ENCODE measurements at regions of chr10 and their contacts with region 1.

Region 1: DNA sequence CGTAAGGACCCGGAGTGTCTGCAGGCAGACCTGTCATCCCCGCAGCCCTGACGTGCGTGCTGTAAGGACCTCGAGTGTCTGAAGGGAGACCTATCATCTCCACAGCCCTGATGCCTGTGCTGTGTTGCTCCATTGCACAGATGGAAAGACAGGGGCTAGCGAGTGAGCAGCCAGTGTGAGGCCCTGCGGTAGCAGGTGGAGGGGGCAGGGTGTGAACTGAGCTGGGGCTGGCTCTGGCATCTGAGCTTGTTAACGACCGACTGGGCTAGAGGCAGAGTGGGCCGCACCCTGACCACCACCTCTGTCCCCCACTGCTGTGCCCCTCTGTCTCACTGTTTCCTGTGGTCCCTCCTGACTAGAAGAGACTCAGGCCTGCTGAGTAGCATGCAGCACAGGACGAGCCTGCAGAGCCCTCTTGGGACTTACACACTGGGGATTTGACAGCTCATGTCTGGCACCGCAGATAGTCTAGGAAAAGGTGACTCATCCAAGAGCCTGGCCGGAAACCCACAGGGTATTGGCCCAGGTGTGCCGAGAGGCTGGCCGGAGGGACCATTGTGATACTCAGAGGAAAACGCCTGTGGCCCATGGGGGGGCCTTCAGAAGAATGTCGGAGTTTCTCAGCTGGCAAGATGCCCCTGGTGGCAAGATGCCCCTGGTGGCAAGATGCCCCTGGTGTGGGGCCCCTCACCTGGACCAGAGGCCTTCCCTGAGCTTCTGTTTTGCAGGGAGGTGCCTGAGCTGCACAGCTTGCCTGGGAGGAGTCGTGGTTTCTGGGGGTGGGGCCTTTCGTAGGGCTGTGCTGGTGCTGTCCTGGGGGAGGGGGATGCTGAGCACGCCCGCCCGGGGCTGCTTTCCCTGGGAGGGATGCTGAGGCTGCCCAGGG is 34.3 kb downstream of the INPP5A start:
- DNase-seq: peak; percentile 90
- H3K4me3 Mint-ChIP-seq: no peak overlapping the region
- H3K27ac Mint-ChIP-seq: peak overlapping the region; percentile 84
- H3K4me1 Mint-ChIP-seq: peaks cover 15% of the 10 kb centered on the region
- H3K27me3 Mint-ChIP-seq: no peaks in the 10 kb centered on the region

Region 2: DNA sequence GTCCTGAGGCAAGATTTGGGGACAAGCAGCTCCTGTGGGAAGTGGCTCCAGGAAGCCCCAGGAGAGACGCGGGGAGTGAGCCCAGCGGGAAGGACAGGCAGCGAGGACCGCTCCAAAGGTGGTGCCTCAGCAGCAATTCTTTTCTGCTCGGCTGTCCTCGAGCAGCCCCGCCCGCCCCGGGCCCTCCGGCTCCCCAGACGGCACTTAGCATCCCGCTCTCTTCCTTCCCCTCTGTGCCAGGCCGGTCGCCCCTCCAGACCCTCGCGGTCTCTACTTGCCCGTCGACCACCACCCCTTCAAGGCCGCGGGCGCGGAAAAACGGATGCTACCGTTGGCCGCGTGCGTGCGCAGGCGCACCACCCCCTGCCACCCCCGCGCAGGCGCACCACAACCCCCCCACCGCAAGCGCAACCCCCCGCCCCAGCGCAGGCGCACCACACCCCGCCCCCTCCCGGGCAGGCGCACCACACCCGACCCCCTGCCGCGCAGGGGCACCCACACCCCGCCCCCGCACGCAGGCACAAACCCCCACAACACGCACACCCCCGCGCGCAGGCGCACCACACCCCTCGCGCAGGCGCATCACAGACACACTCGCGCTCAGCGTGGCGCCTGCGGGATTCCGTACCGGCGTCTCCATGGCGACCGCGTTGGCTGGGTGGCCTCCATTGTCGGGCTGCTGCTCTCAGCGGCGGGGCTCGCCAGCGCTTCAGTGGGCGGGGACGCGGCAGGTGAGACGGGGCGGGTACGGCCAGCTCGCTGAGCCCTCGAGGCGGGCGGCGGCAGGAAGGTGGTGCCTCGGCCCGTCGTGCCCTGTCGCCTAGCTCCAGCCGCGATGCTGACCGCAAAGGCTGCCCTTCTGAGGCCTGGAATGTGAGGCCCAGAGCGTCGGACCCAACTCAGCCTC is 240.1 kb before region 1 on chr10 and contains the start of gene LRRC27:
- intact Hi-C with region 1: no loop called
- DNase-seq: peak; percentile 100
- H3K4me3 Mint-ChIP-seq: peak within 1 kb of the TSS; percentile 88
- H3K27ac Mint-ChIP-seq: peak within 1 kb of the TSS; percentile 96
- H3K4me1 Mint-ChIP-seq: peaks cover 50% of the 10 kb centered on the region
- H3K27me3 Mint-ChIP-seq: peaks cover 4% of the 10 kb centered on the region
- total RNA-seq, gene LRRC27: 2.3 and 3.3 TPM in 2 replicates

Region 3: DNA sequence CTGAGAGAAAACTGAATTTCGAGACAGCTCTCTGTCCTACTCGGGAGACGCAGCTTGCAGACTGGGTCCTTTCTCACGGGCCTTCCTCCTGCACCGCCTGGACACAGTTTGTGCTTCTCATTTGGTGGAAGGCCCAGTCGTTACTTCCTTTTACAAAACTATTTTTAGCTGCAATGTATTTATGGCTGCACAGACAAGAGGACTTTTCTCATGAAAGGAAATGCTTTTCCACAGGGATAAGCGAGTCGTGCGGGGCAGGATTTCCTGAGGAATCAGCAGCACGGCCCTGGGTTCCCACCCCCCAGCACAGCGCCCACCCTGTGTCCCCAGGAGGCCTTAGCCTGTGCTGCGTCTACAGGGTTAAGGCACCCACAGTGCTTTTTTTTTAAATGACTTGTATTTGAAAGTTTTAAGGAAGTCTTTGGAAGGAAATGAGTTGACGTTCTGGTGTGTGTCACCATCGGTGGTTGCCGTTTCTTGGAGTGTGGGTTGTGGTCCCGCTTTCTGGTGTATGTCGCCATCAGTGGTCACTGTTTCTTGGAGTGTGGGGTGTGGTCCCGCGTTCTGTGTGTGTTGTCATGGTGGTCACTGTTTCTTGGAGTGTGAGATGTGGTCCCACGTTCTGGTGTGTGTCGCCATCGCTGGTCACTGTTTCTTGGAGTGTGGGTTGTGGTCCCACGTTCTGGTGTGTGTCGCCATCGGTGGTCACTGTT is 16.6 kb after region 1 on chr10:
- intact Hi-C with region 1: loop called (anchors 1 kb)
- DNase-seq: peak; percentile 81
- H3K4me3 Mint-ChIP-seq: peak overlapping the region; percentile 44
- H3K27ac Mint-ChIP-seq: peak overlapping the region; percentile 60
- H3K4me1 Mint-ChIP-seq: peaks cover 35% of the 10 kb centered on the region
- H3K27me3 Mint-ChIP-seq: no peaks in the 10 kb centered on the region

Region 4: DNA sequence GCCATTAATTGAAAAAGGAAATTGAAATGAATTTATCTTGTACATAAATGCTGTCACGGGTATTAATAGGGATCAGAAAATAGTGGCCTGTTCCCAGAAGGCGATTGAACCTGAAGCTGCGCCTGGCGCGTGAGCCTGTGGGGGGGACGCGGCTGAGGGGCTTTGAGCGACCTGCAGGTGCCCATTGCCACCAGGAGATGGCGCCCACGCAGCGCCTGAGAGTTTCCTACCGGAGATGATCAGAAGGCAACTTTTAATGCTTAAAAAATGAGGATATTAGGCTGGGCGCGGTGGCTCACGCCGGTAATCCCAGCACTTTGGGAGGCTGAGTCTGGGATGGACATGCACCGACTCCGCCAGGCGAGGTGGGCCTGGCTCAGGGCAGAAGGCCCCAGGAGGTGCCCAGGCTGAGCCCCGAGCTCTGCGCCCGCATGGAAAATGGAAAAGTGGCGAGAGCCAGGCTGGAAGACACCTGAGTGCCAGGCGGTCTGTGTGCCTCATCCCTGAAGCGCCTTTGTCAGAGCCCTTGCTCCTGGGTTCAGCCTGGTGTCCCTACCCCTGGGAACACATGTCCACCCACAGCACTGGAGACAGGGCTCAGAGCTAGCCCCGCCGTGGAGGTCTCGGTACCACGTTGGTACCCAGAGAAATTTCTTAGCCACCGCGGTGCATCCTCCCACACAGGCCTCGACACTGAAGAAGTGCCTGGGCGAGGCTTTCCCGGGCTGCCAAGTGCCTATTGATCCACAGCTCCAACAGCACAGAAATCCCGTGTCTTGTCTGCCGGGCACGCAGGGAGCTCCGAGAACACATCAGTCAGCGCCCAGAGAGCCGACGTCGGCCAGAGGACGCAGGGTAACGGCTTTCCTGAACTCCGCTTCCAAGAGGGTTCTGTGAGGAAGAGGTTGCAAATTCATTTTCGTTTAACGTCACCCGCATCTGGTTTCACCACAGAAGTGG is 83.1 kb after region 1 on chr10:
- intact Hi-C with region 1: no loop called
- DNase-seq: peak; percentile 84
- H3K4me3 Mint-ChIP-seq: no peak overlapping the region
- H3K27ac Mint-ChIP-seq: no peak overlapping the region
- H3K4me1 Mint-ChIP-seq: no peaks in the 10 kb centered on the region
- H3K27me3 Mint-ChIP-seq: no peaks in the 10 kb centered on the region